ENCODE measurements at regions of chr17 and their contacts with region 1.

Region 1: GRCh38 chr17:78568494-78569115 is 8.6 kb downstream of the DNAH17 start:
- DNase-seq: peak in 1 of 2 experiments; percentile 52
- ATAC-seq: peak; percentile 45 to 71; a peak in 4 of 6 replicates
- H3K4me3 ChIP-seq: no peak overlapping the region
- H3K27ac ChIP-seq: peak overlapping the region; percentile 9 to 76; a peak in 5 of 6 replicates
- H3K4me1 ChIP-seq: peaks cover 13% of the 10 kb centered on the region
- CTCF ChIP-seq: no peak
- EP300 ChIP-seq: no peak
- POLR2A ChIP-seq: no peak
- RAD21 ChIP-seq: no peak

Region 2: DNA sequence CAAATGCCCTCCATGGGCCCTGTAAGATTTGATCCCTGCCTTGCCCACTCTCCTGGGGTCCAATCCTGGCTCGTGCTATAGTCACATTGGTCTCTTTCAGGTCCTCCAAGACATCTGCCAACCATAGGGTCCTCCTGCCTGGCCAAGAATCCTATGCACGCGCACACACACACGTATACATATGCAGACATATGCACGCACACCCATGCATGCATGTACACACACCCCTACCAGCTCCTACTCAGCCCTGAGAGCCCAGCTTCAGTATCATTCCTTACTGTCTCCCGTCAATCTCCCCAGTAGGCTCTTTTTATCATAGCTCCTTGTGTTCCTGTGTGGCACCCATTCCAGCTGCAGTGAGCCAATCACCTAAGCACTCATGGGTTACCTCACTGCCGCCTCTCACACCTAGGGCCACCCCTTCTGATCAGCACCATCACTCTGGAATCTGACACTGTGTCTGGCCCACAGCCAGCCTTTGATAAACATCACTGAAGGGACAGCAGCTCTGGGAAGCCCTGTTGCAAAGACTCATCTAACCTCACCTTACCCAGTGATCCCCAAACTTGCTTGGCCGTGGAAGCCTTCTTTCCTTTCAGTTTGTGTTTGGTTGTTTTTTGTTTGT is 16.5 kb after region 1 on chr17:
- CTCF ChIA-PET with region 1: interaction called, 10 read pairs
- POLR2A ChIA-PET with region 1: no interaction called
- DNase-seq: no peak
- ATAC-seq: no peak
- H3K4me3 ChIP-seq: no peak overlapping the region
- H3K27ac ChIP-seq: peak overlapping the region; percentile 34 to 94; a peak in 4 of 6 replicates
- H3K4me1 ChIP-seq: peaks cover 23% of the 10 kb centered on the region
- CTCF ChIP-seq: no peak
- EP300 ChIP-seq: no peak
- POLR2A ChIP-seq: no peak
- RAD21 ChIP-seq: no peak